IMR-90 (cell line): ENCODE measurements at regions of chr1 and their contacts with region 1.

Region 1: DNA sequence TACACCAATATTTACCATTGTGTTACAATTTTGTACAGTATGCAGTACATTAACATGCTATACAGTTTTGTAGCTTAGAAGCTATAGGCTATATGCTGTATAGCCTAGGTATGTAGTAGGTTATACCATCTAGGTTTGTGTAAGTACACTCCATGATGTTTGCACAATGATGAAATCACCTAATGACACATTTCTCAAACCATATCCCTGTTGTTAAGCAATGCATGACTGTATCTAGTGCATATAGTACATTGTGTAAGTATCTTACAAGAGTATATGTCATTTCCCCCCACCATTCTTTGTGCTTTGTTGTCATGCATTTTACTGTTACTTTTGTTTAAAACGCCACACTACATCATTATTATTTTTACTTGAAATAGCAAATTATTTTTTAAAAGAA is 65.7 kb upstream of the RNF11 start:
- DNase-seq: peak; percentile 47
- ATAC-seq: no peak
- H3K4me3 ChIP-seq: no peak overlapping the region
- H3K27ac ChIP-seq: no peak overlapping the region
- H3K4me1 ChIP-seq: no peaks in the 10 kb centered on the region
- H3K27me3 ChIP-seq: peaks cover 4% of the 10 kb centered on the region; the same call in 1 of the 2 replicates
- CTCF ChIP-seq: no peak
- POLR2A ChIP-seq: no peak
- RAD21 ChIP-seq: no peak

Region 2: GRCh38 chr1:50968158-50968820 is 202.1 kb before region 1 on chr1:
- CTCF ChIA-PET with region 1: no interaction called
- POLR2A ChIA-PET with region 1: interaction called, 10 read pairs
- dilution Hi-C with region 1: no loop called
- in situ Hi-C with region 1: no loop called
- intact Hi-C with region 1: no loop called
- DNase-seq: peak; percentile 89
- ATAC-seq: peak; percentile 86
- H3K4me3 ChIP-seq: peak overlapping the region; percentile 88
- H3K27ac ChIP-seq: peak overlapping the region; percentile 95
- H3K4me1 ChIP-seq: no peaks in the 10 kb centered on the region
- H3K27me3 ChIP-seq: no peaks in the 10 kb centered on the region
- CTCF ChIP-seq: peak; percentile 42
- POLR2A ChIP-seq: peak; percentile 71
- RAD21 ChIP-seq: no peak

Region 3: DNA sequence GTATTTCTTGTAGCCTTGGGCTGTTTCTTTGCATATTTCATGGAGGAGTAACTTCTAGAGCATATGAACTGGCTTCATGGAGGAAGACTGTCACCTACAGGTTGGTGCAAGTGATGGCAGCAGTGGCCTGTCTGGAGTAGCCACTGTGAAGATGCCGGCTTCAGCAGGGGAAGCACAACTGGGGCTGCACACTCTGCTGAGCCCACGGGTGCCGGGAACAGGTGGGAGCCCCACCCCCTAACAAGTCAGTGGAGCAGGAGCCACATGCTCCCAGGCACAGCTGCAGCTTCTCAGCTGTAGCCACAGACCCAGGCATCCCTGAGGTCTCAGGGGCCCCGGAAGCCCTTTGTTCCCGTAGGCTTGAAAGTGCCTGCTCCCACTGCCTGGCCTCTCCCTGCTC is 111.5 kb before region 1 on chr1:
- CTCF ChIA-PET with region 1: no interaction called
- POLR2A ChIA-PET with region 1: no interaction called
- dilution Hi-C with region 1: no loop called
- in situ Hi-C with region 1: no loop called
- intact Hi-C with region 1: no loop called
- DNase-seq: peak; percentile 37
- ATAC-seq: peak; percentile 75
- H3K4me3 ChIP-seq: no peak overlapping the region
- H3K27ac ChIP-seq: no peak overlapping the region
- H3K4me1 ChIP-seq: peaks cover 4% of the 10 kb centered on the region; the same call in 1 of the 2 replicates
- H3K27me3 ChIP-seq: peaks cover 2% of the 10 kb centered on the region
- CTCF ChIP-seq: peak; percentile 60
- POLR2A ChIP-seq: no peak
- RAD21 ChIP-seq: peak; percentile 75